T-cell (primary cell): ENCODE measurements at regions of chr11 and their contacts with region 1.

Region 1: GRCh38 chr11:31337806-31338205 is 31.7 kb downstream of the DCDC1 start:
- DNase-seq: no peak
- ATAC-seq: no peak
- H3K4me3 ChIP-seq: no peak overlapping the region
- H3K4me3 Mint-ChIP-seq: no peak overlapping the region
- H3K27ac ChIP-seq: no peak overlapping the region
- H3K27ac Mint-ChIP-seq: no peak overlapping the region
- H3K4me1 ChIP-seq: no peaks in the 10 kb centered on the region
- H3K4me1 Mint-ChIP-seq: no peaks in the 10 kb centered on the region
- H3K27me3 ChIP-seq: peaks cover 0 to 10% of the 10 kb centered on the region in 2 experiments
- H3K27me3 Mint-ChIP-seq: peaks cover 17 to 23% of the 10 kb centered on the region in 2 donors

Region 2: GRCh38 chr11:31218847-31219246 is 119.0 kb before region 1 on chr11:
- CTCF ChIA-PET with region 1: no interaction called
- POLR2A ChIA-PET with region 1: no interaction called
- DNase-seq: no peak
- ATAC-seq: no peak
- H3K4me3 ChIP-seq: no peak overlapping the region
- H3K4me3 Mint-ChIP-seq: no peak overlapping the region
- H3K27ac ChIP-seq: no peak overlapping the region
- H3K27ac Mint-ChIP-seq: no peak overlapping the region
- H3K4me1 ChIP-seq: no peaks in the 10 kb centered on the region
- H3K4me1 Mint-ChIP-seq: no peaks in the 10 kb centered on the region
- H3K27me3 ChIP-seq: no peaks in the 10 kb centered on the region
- H3K27me3 Mint-ChIP-seq: peaks cover 0 to 4% of the 10 kb centered on the region in 2 donors

Region 3: GRCh38 chr11:31387379-31387778 is 49.6 kb after region 1 on chr11:
- CTCF ChIA-PET with region 1: no interaction called
- POLR2A ChIA-PET with region 1: interaction called in 1 of 2 experiments, 10 read pairs
- DNase-seq: no peak
- ATAC-seq: no peak
- H3K4me3 ChIP-seq: no peak overlapping the region
- H3K4me3 Mint-ChIP-seq: no peak overlapping the region
- H3K27ac ChIP-seq: no peak overlapping the region
- H3K27ac Mint-ChIP-seq: no peak overlapping the region
- H3K4me1 ChIP-seq: no peaks in the 10 kb centered on the region
- H3K4me1 Mint-ChIP-seq: peaks cover 19 to 28% (median 23%) of the 10 kb centered on the region in 3 donors
- H3K27me3 ChIP-seq: no peaks in the 10 kb centered on the region
- H3K27me3 Mint-ChIP-seq: no peaks in the 10 kb centered on the region